HCT116 (cell line): ENCODE measurements at regions of chr2 and their contacts with region 1.

Region 1: GRCh38 chr2:164703915-164704706 is 82.8 kb upstream of the GRB14 start:
- DNase-seq: no peak
- ATAC-seq: 0 out of 2 replicates have a peak, but pooled peaks have one; percentile 46
- H3K4me3 ChIP-seq: no peak overlapping the region
- H3K27ac ChIP-seq: no peak overlapping the region
- H3K4me1 ChIP-seq: no peaks in the 10 kb centered on the region
- H3K27me3 ChIP-seq: no peaks in the 10 kb centered on the region
- CTCF ChIP-seq: no peak
- POLR2A ChIP-seq: no peak
- RAD21 ChIP-seq: no peak

Region 2: DNA sequence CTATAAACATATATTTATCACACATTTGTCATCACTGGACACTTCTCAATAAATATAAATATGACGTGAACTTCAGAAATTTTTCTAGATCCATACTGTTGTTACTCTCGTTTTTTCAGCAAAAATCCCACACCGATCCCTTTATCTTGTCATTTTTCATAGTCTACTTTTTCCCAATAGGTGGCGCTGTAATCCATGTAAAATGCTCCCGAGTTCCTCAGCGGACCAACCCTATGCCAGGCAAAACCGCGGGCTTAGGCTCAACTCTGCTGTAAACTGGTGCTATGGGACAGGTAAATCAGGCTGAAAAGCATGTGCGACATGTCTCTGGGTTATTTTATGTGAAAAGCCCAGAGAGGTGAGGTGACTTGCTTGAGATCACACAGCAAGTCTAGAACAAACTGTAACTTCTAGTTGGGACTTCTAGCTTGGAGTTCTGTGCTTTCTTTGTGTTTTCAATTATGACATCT is 33.5 kb after region 1 on chr2:
- CTCF ChIA-PET with region 1: no interaction called
- POLR2A ChIA-PET with region 1: no interaction called
- RAD21 ChIA-PET with region 1: no interaction called
- intact Hi-C with region 1: no loop called
- DNase-seq: peak; percentile 73
- ATAC-seq: peak; percentile 94
- H3K4me3 ChIP-seq: no peak overlapping the region
- H3K27ac ChIP-seq: no peak overlapping the region
- H3K4me1 ChIP-seq: peaks cover 0 to 20% of the 10 kb centered on the region in 2 experiments; a peak in 3 of 4 replicates
- H3K27me3 ChIP-seq: no peaks in the 10 kb centered on the region
- CTCF ChIP-seq: peak; percentile 57 to 90 (median 81)
- POLR2A ChIP-seq: no peak
- RAD21 ChIP-seq: peak; percentile 92

Region 3: GRCh38 chr2:164761740-164762460 is 57.8 kb after region 1 on chr2:
- CTCF ChIA-PET with region 1: no interaction called
- POLR2A ChIA-PET with region 1: no interaction called
- RAD21 ChIA-PET with region 1: no interaction called
- intact Hi-C with region 1: loop called (anchors 2 kb)
- DNase-seq: no peak
- ATAC-seq: no peak
- H3K4me3 ChIP-seq: no peak overlapping the region
- H3K27ac ChIP-seq: no peak overlapping the region
- H3K4me1 ChIP-seq: peaks cover 3 to 6% of the 10 kb centered on the region in 2 experiments; a peak in 3 of 4 replicates
- H3K27me3 ChIP-seq: no peaks in the 10 kb centered on the region
- CTCF ChIP-seq: no peak
- POLR2A ChIP-seq: no peak
- RAD21 ChIP-seq: no peak